ENCODE measurements at regions of chr1 and their contacts with region 1.

Region 1: DNA sequence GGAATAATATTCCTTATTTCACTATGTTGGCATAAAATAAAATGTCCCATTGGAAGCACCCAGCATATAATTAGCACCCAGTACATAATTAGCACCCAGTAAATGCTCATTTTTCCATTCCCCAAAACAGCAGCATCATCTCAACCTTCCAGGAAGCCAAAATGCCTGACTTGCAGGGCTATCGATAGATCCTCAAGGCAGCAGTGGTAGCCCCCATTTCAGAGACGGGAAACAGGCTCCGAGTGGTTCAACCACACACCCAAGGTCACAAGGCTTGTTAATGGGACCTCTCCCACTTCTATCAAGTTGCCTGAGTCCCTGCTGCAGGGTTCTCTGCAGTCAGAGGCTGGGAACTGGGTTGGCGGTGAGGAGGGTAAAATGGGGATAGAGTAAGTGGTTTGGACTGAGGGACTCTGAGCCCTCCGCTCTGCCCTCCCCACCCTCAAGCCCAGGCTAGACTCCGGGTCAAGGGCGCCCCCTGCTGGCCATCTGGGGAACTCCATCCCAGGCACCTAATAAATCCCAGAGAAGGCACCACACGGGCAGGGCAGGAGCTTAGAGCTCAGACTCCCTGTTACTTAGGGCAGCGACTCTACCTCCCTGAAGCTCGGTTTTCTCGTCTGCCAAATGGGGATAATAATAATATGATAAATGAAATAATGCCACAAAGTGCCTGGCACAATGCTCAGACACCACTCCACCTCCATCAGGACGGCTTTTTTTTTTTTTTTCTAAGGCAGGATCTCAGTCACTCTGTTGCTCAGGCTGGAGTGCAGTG is 21.9 kb upstream of the LAPTM5 start:
- DNase-seq: peak; percentile 89 to 97 (median 91)
- ATAC-seq: peak; percentile 76
- H3K4me3 ChIP-seq: peak overlapping the region; percentile 19
- H3K27ac ChIP-seq: peak overlapping the region; percentile 93
- H3K4me1 ChIP-seq: peaks cover 64% of the 10 kb centered on the region in 2 experiments
- H3K27me3 ChIP-seq: no peaks in the 10 kb centered on the region
- CTCF ChIP-seq: peak; percentile 96 to 99 (median 99)
- EP300 ChIP-seq: no peak
- POLR2A ChIP-seq: no peak
- RAD21 ChIP-seq: peak; percentile 100

Region 2: DNA sequence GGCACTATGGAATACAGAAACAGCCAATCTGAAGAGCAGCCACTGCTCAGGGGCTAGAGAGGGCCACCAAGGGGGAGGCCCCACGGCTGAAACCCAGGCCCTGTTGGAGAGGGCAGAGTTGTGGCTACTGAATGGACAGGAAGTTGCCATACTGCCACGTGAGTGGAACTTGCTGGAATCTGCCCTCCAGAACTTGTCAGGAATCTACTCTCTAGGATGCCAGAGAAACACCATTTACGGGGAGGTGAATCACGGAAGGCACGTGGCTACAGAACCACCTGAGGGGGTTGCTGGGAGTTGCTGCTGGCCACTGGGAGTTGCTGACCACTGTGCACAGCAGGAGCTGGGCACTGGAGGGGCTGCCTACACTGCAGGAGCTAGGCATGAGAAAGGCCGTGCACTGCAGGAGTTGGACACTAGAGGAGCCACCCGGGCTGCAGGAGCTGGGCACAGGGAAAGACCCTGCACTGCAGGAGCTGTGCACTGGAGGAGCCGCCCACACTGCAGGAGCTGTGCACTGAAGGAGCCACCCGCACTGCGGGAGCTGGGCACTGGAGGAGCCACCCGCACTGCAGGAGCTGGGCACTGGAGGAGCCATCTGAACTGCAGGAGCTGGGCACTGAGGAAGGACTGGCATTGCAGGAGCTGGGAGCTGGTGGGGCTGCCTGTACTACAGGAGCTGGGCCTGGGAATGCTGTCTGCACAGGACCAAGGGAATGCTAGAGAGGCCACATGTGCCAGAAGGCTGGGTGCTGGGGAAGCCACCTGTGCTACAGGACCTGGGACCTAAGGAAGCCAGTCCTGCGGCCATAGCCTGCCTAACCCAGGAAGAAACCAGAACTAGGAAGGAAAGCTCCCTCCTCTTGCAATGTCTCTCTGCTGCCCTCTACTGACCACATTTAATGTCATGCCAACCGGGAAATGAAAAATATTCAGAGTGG is 399.5 kb before region 1 on chr1:
- CTCF ChIA-PET with region 1: no interaction called
- POLR2A ChIA-PET with region 1: no interaction called
- in situ Hi-C with region 1: no loop called
- intact Hi-C with region 1: loop called (anchors 10 kb)
- DNase-seq: peak; percentile 75 to 85 (median 82)
- ATAC-seq: peak; percentile 83
- H3K4me3 ChIP-seq: no peak overlapping the region
- H3K27ac ChIP-seq: no peak overlapping the region
- H3K4me1 ChIP-seq: peaks cover 0 to 4% of the 10 kb centered on the region in 2 experiments; a peak in 1 of 5 replicates
- H3K27me3 ChIP-seq: peaks cover 0 to 51% of the 10 kb centered on the region in 2 experiments; a peak in 3 of 5 replicates
- CTCF ChIP-seq: peak; percentile 81 to 97 (median 92)
- EP300 ChIP-seq: no peak
- POLR2A ChIP-seq: no peak
- RAD21 ChIP-seq: peak; percentile 65 to 85

Region 3: DNA sequence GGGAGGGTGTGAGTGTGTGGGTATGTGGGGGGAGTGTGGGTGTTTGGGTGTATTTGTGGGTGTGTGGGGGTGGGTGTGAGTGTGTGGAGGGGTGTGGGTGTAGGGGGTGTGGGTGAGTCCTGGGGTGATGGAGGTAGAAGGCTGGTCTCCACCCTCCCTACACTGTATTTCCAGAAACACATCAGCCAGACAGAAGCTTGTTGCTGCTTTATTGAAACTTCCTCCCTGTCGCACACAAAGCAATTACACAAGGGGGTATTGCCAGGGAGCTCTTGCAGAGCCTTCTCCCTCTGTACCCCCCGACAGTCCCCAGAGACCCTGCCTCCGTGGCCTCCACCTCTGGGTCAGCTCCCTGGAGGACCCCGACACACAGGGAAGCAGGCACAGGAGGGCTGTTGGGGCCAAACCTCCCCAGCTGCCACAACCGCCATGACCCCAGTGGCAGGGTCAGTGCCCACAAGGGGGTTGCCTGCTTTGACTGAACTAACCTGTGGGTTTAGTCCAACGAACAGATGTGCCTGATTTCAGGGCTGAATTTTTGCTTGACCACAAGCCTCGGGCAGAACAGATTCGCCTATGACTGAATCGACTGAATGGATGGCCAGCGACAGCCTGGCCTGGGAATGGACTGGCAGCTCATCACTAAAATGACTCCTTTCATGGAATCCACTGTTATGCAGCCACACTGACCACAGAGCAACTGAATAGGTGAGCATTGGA is 47.0 kb before region 1 on chr1:
- CTCF ChIA-PET with region 1: interaction called, 3 read pairs
- POLR2A ChIA-PET with region 1: interaction called, 74 read pairs
- in situ Hi-C with region 1: no loop called
- intact Hi-C with region 1: loop called (anchors 2 kb)
- DNase-seq: peak in 1 of 4 experiments; percentile 38
- ATAC-seq: no peak
- H3K4me3 ChIP-seq: peak overlapping the region; percentile 26
- H3K27ac ChIP-seq: peak overlapping the region; percentile 50; the same call in 2 of the 3 replicates
- H3K4me1 ChIP-seq: peaks cover 54 to 66% of the 10 kb centered on the region in 2 experiments
- H3K27me3 ChIP-seq: no peaks in the 10 kb centered on the region
- CTCF ChIP-seq: no peak
- EP300 ChIP-seq: no peak
- POLR2A ChIP-seq: no peak
- RAD21 ChIP-seq: no peak

Region 4: DNA sequence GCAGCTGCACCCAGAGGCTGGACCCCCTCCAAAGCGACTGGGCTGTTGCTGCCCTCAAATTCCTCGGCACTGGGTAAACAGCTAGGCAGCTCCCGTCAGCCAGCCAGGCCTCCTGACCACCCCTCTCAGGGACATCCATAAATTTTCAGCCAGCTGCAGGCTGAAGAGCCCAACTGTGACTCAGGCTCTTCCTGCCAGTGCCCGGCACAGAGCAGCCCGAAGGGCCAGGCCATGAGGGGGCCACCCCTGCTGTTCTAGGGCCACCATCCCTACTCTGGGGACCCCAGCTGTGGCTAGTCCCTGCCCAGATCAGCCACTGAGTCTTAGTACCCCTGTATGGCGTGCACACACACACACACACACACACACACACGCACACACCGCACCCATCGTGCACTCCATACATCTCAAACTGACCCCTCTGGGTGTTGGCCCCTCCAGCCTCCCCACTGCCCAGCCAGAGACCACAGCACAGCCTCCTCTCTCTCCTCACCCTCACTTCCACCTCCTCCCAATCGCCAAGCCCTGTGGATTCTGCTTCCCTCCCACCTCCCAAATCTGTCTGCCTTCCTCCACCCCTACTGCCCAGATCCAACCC is 15.7 kb before region 1 on chr1:
- CTCF ChIA-PET with region 1: interaction called, 3 read pairs
- POLR2A ChIA-PET with region 1: interaction called, 59 read pairs
- in situ Hi-C with region 1: no loop called
- intact Hi-C with region 1: loop called (anchors 2 kb)
- DNase-seq: no peak
- ATAC-seq: no peak
- H3K4me3 ChIP-seq: no peak overlapping the region
- H3K27ac ChIP-seq: peak overlapping the region; percentile 78; the same call in 2 of the 3 replicates
- H3K4me1 ChIP-seq: peaks cover 67 to 88% of the 10 kb centered on the region in 2 experiments
- H3K27me3 ChIP-seq: no peaks in the 10 kb centered on the region; a peak in 1 of 5 replicates
- CTCF ChIP-seq: no peak
- EP300 ChIP-seq: no peak
- POLR2A ChIP-seq: no peak
- RAD21 ChIP-seq: no peak

Region 5: GRCh38 chr1:30911046-30911954 is 131.8 kb after region 1 on chr1:
- CTCF ChIA-PET with region 1: interaction called, 90 read pairs
- POLR2A ChIA-PET with region 1: interaction called, 19 read pairs
- in situ Hi-C with region 1: no loop called
- intact Hi-C with region 1: loop called (anchors 1 kb)
- DNase-seq: peak; percentile 80 to 94 (median 86)
- ATAC-seq: peak; percentile 78
- H3K4me3 ChIP-seq: no peak overlapping the region
- H3K27ac ChIP-seq: no peak overlapping the region
- H3K4me1 ChIP-seq: peaks cover 31 to 53% of the 10 kb centered on the region in 2 experiments
- H3K27me3 ChIP-seq: no peaks in the 10 kb centered on the region
- CTCF ChIP-seq: peak; percentile 96 to 97 (median 96)
- EP300 ChIP-seq: peak; percentile 31; the same call in 1 of the 2 replicates
- POLR2A ChIP-seq: no peak
- RAD21 ChIP-seq: peak; percentile 100

Region 6: DNA sequence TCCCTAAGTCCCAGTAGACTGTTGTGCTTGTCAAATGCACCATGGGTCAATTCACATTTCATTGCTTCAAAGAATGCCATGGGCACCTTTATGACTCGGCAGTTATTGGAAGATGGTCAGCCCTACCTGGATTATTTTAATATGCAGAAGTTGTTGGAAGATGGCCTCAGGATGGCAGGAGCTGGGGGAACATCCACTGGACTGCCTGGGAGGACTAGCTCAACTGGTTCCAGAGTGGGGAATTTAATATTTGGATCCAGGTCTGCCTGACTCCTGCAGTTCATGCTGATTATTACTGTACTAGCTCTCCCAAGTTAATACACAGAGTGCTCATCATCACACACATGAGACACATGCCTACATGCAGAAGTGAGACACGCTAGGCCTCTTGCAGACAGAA is 395.1 kb after region 1 on chr1:
- CTCF ChIA-PET with region 1: no interaction called
- POLR2A ChIA-PET with region 1: no interaction called
- in situ Hi-C with region 1: no loop called
- intact Hi-C with region 1: loop called (anchors 10 kb)
- DNase-seq: no peak
- ATAC-seq: no peak
- H3K4me3 ChIP-seq: no peak overlapping the region
- H3K27ac ChIP-seq: no peak overlapping the region
- H3K4me1 ChIP-seq: peaks cover 32% of the 10 kb centered on the region in 2 experiments
- H3K27me3 ChIP-seq: peaks cover 5 to 8% of the 10 kb centered on the region in 2 experiments; a peak in 3 of 5 replicates
- CTCF ChIP-seq: no peak
- EP300 ChIP-seq: no peak
- POLR2A ChIP-seq: no peak
- RAD21 ChIP-seq: no peak